HCT116 (cell line): ENCODE measurements at regions of chr10 and their contacts with region 1.

Region 1: GRCh38 chr10:119542988-119543813 is 682 bp upstream of the RGS10 start:
- DNase-seq: no peak
- ATAC-seq: peak; percentile 63
- H3K4me3 ChIP-seq: peak overlapping the region; percentile 79
- H3K27ac ChIP-seq: peak overlapping the region; percentile 87
- H3K4me1 ChIP-seq: peaks cover 25 to 51% of the 10 kb centered on the region in 2 experiments
- H3K27me3 ChIP-seq: peaks cover under 1% of the 10 kb centered on the region; the same call in 1 of the 2 replicates
- CTCF ChIP-seq: peak; percentile 67 to 98 (median 76)
- POLR2A ChIP-seq: no peak
- RAD21 ChIP-seq: peak; percentile 78

Region 2: DNA sequence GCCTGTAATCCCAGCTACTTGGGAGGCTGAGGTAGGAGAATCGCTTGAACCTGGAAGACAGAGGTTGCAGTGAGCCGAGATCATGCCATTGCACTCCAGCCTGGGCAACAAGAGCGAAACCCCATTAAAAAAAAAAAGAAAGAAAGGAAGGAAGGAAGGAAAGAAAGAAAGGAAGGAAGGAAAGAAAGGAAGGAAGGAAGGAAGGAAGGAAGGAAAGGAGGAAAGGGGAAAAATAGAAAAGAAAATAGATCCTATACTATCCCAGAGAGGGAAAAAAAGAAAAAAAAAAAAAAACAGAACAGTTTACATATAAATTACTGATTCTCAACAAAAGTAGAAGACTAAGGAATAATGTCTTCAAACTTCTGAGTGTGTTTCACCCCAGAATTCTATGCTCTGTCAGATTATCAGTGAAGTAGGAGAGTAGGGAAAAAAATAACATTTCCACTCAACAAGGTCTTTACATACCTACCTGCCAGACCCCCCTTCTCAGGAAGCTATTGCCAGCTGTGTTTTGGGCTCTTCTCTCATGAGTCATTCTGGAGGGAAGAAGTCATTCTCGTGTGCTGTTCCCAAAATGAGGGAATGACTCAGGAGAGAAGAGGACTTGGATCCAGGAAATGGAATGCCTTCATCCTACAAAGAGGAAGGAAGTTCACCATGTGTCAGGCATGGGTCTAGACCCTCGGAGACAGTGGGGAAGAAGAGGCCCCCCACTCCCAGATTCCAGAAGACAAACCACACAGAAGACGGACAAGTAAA is 21.6 kb before region 1 on chr10:
- CTCF ChIA-PET with region 1: interaction called, 3 read pairs
- POLR2A ChIA-PET with region 1: interaction called, 9 read pairs
- RAD21 ChIA-PET with region 1: no interaction called
- intact Hi-C with region 1: loop called (anchors 2 kb)
- DNase-seq: peak; percentile 89
- ATAC-seq: peak; percentile 33
- H3K4me3 ChIP-seq: peak overlapping the region in 1 of 2 experiments; percentile 33; a peak in 2 of 4 replicates
- H3K27ac ChIP-seq: peak overlapping the region; percentile 66
- H3K4me1 ChIP-seq: peaks cover 25 to 52% of the 10 kb centered on the region in 2 experiments
- H3K27me3 ChIP-seq: no peaks in the 10 kb centered on the region
- CTCF ChIP-seq: no peak
- POLR2A ChIP-seq: no peak
- RAD21 ChIP-seq: no peak

Region 3: DNA sequence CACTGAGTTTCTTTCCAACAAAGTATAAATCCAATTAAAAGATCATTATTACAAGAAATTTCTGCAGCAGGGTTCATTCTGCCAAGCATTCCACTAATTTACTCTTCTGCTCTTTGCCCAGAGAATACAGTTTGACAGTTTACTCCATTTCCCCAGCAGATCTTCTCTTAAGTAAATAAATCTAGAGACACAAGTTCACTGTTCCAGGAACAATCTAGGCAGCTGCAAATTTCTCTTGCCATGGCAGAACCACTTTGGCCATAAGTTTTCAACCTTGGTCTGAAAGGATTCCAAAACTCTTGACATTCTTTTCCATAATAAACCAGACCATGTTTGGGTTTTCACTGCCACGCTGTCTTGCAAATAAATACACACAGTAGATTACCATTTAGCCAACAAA is 12.1 kb before region 1 on chr10:
- CTCF ChIA-PET with region 1: interaction called, 10 read pairs
- POLR2A ChIA-PET with region 1: interaction called, 4 read pairs
- RAD21 ChIA-PET with region 1: no interaction called
- intact Hi-C with region 1: no loop called
- DNase-seq: no peak
- ATAC-seq: no peak
- H3K4me3 ChIP-seq: no peak overlapping the region
- H3K27ac ChIP-seq: no peak overlapping the region
- H3K4me1 ChIP-seq: peaks cover 6 to 8% of the 10 kb centered on the region in 2 experiments; a peak in 3 of 4 replicates
- H3K27me3 ChIP-seq: no peaks in the 10 kb centered on the region
- CTCF ChIP-seq: no peak
- POLR2A ChIP-seq: no peak
- RAD21 ChIP-seq: no peak